CD4-positive, alpha-beta memory T cell (primary cell): ENCODE measurements at regions of chr10 and their contacts with region 1.

Region 1: GRCh38 chr10:73810735-73811465 is 498 bp downstream of the NDST2 start:
- DNase-seq: peak; percentile 64 to 71 (median 69)
- H3K4me3 ChIP-seq: peak overlapping the region; percentile 77 to 81
- H3K4me3 Mint-ChIP-seq: peak overlapping the region; percentile 89 to 95 (median 91)
- H3K27ac ChIP-seq: peak overlapping the region; percentile 88
- H3K27ac Mint-ChIP-seq: peak overlapping the region; percentile 84 to 98 (median 95)
- H3K4me1 ChIP-seq: peaks cover 51% of the 10 kb centered on the region
- H3K4me1 Mint-ChIP-seq: peaks cover 29 to 49% (median 40%) of the 10 kb centered on the region in 4 donors
- H3K27me3 ChIP-seq: no peaks in the 10 kb centered on the region
- H3K27me3 Mint-ChIP-seq: no peaks in the 10 kb centered on the region

Region 2: DNA sequence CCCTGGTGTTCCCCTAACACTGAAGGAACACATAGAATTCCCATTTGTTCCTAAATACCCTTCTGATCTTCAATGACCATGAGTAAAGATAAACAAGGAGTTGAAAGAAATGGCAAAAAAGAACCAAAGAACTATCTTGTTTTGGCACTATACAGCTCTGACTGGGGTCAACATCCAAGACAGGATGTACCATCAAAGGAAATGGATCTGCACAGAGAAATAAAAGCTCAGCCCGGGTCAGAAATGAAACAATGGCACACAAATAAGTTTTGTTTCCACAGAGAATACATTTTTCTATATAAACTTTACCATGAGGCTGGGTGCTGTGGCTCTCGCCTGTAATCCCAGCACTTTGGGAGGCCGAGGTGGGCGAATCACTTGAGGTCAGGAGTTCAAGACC is 201.8 kb before region 1 on chr10:
- CTCF ChIA-PET with region 1: no interaction called
- POLR2A ChIA-PET with region 1: no interaction called
- intact Hi-C with region 1: no loop called
- DNase-seq: no peak
- H3K4me3 ChIP-seq: no peak overlapping the region
- H3K4me3 Mint-ChIP-seq: no peak overlapping the region
- H3K27ac ChIP-seq: no peak overlapping the region
- H3K27ac Mint-ChIP-seq: no peak overlapping the region
- H3K4me1 ChIP-seq: no peaks in the 10 kb centered on the region
- H3K4me1 Mint-ChIP-seq: no peaks in the 10 kb centered on the region
- H3K27me3 ChIP-seq: no peaks in the 10 kb centered on the region
- H3K27me3 Mint-ChIP-seq: no peaks in the 10 kb centered on the region

Region 3: DNA sequence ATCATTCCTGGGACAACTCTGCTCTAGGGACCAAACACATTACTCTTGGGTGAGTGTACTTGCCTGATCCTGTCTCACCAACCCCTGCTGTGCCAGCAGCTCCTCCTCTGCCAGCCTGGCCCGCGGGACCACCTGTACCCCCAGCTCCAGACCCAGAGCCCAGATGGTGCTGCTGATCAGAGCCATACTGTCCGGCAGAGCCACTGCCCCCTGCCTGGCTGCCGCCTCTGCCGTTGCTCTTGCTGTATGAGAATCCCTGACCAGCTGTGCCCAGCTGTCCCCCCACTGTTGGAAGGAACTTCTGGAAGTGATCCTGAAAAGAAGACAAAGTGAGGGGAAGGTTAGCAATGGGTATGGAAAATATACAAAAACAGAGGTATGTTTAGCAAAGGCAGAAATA is 176.5 kb before region 1 on chr10:
- CTCF ChIA-PET with region 1: no interaction called
- POLR2A ChIA-PET with region 1: no interaction called
- intact Hi-C with region 1: no loop called
- DNase-seq: no peak
- H3K4me3 ChIP-seq: no peak overlapping the region
- H3K4me3 Mint-ChIP-seq: no peak overlapping the region
- H3K27ac ChIP-seq: no peak overlapping the region
- H3K27ac Mint-ChIP-seq: peak overlapping the region in 1 of 7 donors; percentile 18
- H3K4me1 ChIP-seq: no peaks in the 10 kb centered on the region
- H3K4me1 Mint-ChIP-seq: no peaks in the 10 kb centered on the region
- H3K27me3 ChIP-seq: no peaks in the 10 kb centered on the region
- H3K27me3 Mint-ChIP-seq: peaks cover 0 to 1% of the 10 kb centered on the region in 2 donors

Region 4: DNA sequence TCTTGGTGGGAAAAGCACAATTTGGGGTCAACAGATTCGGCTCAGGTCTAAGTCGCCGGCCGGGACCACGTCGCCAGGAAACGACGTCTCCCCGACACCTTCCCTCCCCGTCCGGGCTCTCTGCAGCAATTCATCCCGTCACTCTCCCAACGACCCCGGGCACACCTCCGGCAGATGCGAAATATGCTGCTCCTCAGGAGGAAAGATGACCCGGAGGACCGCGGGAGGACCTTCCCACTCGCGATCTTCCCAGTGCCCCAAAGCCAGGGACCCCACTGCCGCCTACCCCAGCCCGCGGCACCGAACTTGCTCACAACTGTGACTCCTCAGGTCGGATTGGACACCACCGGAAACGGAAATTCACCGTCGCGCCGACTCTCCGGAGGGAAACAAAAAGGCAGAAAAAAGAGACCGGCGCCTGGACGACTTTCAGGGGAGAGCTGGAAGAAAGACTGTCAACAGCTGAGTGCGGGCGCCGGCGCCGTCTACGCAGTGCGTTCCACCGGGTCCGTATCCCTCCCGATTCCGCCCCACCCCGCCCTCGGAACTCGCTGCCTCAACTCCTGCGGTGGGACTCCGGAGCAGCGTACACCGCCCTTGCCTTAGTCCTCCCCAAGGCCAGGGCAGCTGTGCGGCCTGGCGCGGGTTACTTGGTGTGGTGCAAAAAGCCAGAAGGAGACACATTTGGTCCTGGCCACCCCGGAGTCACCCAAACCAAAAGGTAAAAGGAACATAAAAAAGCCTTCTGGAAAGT is 80.6 kb before region 1 on chr10:
- CTCF ChIA-PET with region 1: interaction called, 6 read pairs
- POLR2A ChIA-PET with region 1: interaction called, 10 read pairs
- intact Hi-C with region 1: loop called (anchors 1 kb)
- DNase-seq: peak; percentile 87 to 92 (median 90)
- H3K4me3 ChIP-seq: peak overlapping the region; percentile 78 to 81
- H3K4me3 Mint-ChIP-seq: peak overlapping the region; percentile 98 to 100 (median 100)
- H3K27ac ChIP-seq: peak overlapping the region; percentile 78
- H3K27ac Mint-ChIP-seq: peak overlapping the region; percentile 97 to 100 (median 98)
- H3K4me1 ChIP-seq: peaks cover 15% of the 10 kb centered on the region
- H3K4me1 Mint-ChIP-seq: peaks cover 12 to 39% (median 21%) of the 10 kb centered on the region in 4 donors
- H3K27me3 ChIP-seq: no peaks in the 10 kb centered on the region
- H3K27me3 Mint-ChIP-seq: no peaks in the 10 kb centered on the region

Region 5: DNA sequence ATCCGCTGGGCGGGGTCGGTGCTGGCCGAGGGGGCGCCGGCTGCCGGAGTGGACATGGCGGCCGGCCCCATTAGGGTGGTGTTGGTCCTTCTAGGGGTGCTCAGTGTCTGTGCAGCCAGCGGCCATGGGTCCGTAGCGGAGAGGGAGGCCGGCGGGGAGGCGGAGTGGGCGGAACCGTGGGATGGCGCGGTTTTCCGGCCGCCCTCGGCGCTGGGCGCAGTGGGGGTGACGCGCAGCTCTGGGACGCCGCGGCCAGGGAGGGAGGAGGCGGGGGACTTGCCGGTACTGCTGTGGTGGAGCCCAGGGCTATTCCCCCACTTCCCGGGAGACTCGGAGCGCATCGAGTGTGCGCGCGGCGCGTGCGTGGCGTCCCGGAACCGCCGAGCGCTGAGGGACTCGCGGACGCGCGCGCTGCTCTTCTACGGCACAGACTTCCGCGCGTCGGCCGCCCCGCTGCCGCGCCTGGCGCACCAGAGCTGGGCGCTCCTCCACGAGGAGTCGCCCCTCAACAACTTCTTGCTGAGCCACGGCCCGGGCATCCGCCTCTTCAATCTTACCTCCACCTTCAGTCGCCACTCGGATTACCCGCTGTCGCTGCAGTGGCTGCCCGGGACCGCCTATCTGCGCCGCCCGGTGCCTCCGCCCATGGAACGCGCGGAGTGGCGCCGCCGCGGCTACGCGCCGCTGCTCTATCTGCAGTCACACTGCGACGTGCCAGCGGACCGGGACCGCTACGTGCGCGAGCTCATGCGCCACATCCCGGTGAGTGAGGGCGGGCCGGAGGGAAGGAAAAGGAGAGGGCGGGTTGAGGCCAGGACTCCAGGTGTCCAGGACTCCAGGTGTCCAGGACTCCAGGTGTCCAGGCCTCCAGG is 38.4 kb before region 1 on chr10:
- CTCF ChIA-PET with region 1: interaction called, 8 read pairs
- POLR2A ChIA-PET with region 1: interaction called, 77 read pairs
- intact Hi-C with region 1: loop called (anchors 1 kb)
- DNase-seq: peak; percentile 82 to 88 (median 86)
- H3K4me3 ChIP-seq: peak overlapping the region; percentile 92 to 95
- H3K4me3 Mint-ChIP-seq: peak overlapping the region; percentile 93 to 99 (median 96)
- H3K27ac ChIP-seq: peak overlapping the region; percentile 86
- H3K27ac Mint-ChIP-seq: peak overlapping the region; percentile 84 to 98 (median 96)
- H3K4me1 ChIP-seq: peaks cover 62% of the 10 kb centered on the region
- H3K4me1 Mint-ChIP-seq: peaks cover 36 to 83% (median 50%) of the 10 kb centered on the region in 4 donors
- H3K27me3 ChIP-seq: no peaks in the 10 kb centered on the region
- H3K27me3 Mint-ChIP-seq: no peaks in the 10 kb centered on the region

Region 6: GRCh38 chr10:73798927-73799563 is 11.9 kb before region 1 on chr10:
- CTCF ChIA-PET with region 1: interaction called, 3 read pairs
- POLR2A ChIA-PET with region 1: interaction called, 16 read pairs
- intact Hi-C with region 1: no loop called
- DNase-seq: no peak
- H3K4me3 ChIP-seq: no peak overlapping the region
- H3K4me3 Mint-ChIP-seq: no peak overlapping the region
- H3K27ac ChIP-seq: no peak overlapping the region
- H3K27ac Mint-ChIP-seq: peak overlapping the region in 2 of 7 donors; percentile 46 to 63
- H3K4me1 ChIP-seq: no peaks in the 10 kb centered on the region
- H3K4me1 Mint-ChIP-seq: peaks cover 0 to 7% (median 0%) of the 10 kb centered on the region in 4 donors
- H3K27me3 ChIP-seq: no peaks in the 10 kb centered on the region
- H3K27me3 Mint-ChIP-seq: no peaks in the 10 kb centered on the region

Region 7: GRCh38 chr10:73857446-73857845 is 46.5 kb after region 1 on chr10:
- CTCF ChIA-PET with region 1: no interaction called
- POLR2A ChIA-PET with region 1: no interaction called
- intact Hi-C with region 1: no loop called
- DNase-seq: peak in 1 of 5 donors; percentile 58
- H3K4me3 ChIP-seq: no peak overlapping the region
- H3K4me3 Mint-ChIP-seq: peak overlapping the region; percentile 20 to 84 (median 39)
- H3K27ac ChIP-seq: no peak overlapping the region
- H3K27ac Mint-ChIP-seq: peak overlapping the region; percentile 81 to 91 (median 86)
- H3K4me1 ChIP-seq: peaks cover 53% of the 10 kb centered on the region
- H3K4me1 Mint-ChIP-seq: peaks cover 36 to 72% (median 50%) of the 10 kb centered on the region in 4 donors
- H3K27me3 ChIP-seq: no peaks in the 10 kb centered on the region
- H3K27me3 Mint-ChIP-seq: no peaks in the 10 kb centered on the region

Region 8: GRCh38 chr10:73874267-73875138 is 63.6 kb after region 1 on chr10 and contains the start of gene CAMK2G:
- CTCF ChIA-PET with region 1: interaction called, 10 read pairs
- POLR2A ChIA-PET with region 1: interaction called, 13 read pairs
- intact Hi-C with region 1: loop called (anchors 1 kb)
- DNase-seq: peak; percentile 83 to 87 (median 86)
- H3K4me3 ChIP-seq: peak within 1 kb of the TSS; percentile 61 to 72
- H3K4me3 Mint-ChIP-seq: peak within 1 kb of the TSS; percentile 86 to 97 (median 94)
- H3K27ac ChIP-seq: peak within 1 kb of the TSS; percentile 78
- H3K27ac Mint-ChIP-seq: peak within 1 kb of the TSS; percentile 87 to 99 (median 96)
- H3K4me1 ChIP-seq: peaks cover 65% of the 10 kb centered on the region
- H3K4me1 Mint-ChIP-seq: peaks cover 43 to 79% (median 58%) of the 10 kb centered on the region in 4 donors
- H3K27me3 ChIP-seq: no peaks in the 10 kb centered on the region
- H3K27me3 Mint-ChIP-seq: no peaks in the 10 kb centered on the region
- total RNA-seq, gene CAMK2G: 64.3 to 70.4 TPM